Activated CD4-positive, alpha-beta T cell treated with anti-CD3 and anti-CD28 coated beads for 36 hours (primary cell): ENCODE measurements at regions of chr4 and their contacts with region 1.

Region 1: GRCh38 chr4:123488916-123489315 is 92.3 kb downstream of the SPRY1 start:
- DNase-seq: peak; percentile 17
- ATAC-seq: peak; percentile 97
- H3K4me3 Mint-ChIP-seq: no peak overlapping the region
- H3K27ac Mint-ChIP-seq: no peak overlapping the region
- H3K4me1 Mint-ChIP-seq: peaks cover 9% of the 10 kb centered on the region
- H3K27me3 Mint-ChIP-seq: peaks cover under 1% of the 10 kb centered on the region

Region 2: GRCh38 chr4:123168812-123169211 is 320.1 kb before region 1 on chr4:
- CTCF ChIA-PET with region 1: no interaction called
- POLR2A ChIA-PET with region 1: no interaction called
- intact Hi-C with region 1: no loop called
- DNase-seq: no peak
- ATAC-seq: no peak
- H3K4me3 Mint-ChIP-seq: no peak overlapping the region
- H3K27ac Mint-ChIP-seq: no peak overlapping the region
- H3K4me1 Mint-ChIP-seq: no peaks in the 10 kb centered on the region
- H3K27me3 Mint-ChIP-seq: no peaks in the 10 kb centered on the region

Region 3: GRCh38 chr4:123421227-123421936 is 67.5 kb before region 1 on chr4:
- CTCF ChIA-PET with region 1: no interaction called
- POLR2A ChIA-PET with region 1: interaction called, 5 read pairs
- intact Hi-C with region 1: loop called in 1 of 2 experiments (anchors 5 kb)
- DNase-seq: no peak
- ATAC-seq: peak; percentile 7
- H3K4me3 Mint-ChIP-seq: peak overlapping the region; percentile 60
- H3K27ac Mint-ChIP-seq: peak overlapping the region; percentile 97
- H3K4me1 Mint-ChIP-seq: peaks cover 68% of the 10 kb centered on the region
- H3K27me3 Mint-ChIP-seq: peaks cover 2% of the 10 kb centered on the region

Region 4: DNA sequence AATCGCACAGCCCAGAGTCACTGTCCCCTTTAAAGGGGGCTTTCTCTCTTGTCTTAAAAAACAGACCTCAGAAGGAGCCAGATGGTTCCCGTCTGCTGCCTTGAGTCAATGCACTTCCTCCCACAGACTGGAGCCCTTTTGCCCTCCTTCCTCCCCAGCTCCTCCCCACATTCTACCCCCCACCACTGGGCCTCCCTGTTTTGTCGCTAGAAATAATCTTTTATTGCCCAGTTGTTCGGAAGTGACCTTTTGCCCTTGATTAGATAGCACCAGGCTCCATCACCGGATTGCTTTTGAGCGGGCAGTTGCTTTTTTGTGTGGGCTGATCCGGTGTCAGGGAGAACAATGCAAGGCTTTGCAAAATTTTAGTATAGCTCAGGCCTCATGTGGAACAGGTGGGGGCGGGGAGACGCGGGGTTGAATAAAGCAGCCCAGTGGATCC is 44.6 kb before region 1 on chr4:
- CTCF ChIA-PET with region 1: interaction called, 3 read pairs
- POLR2A ChIA-PET with region 1: interaction called, 3 read pairs
- intact Hi-C with region 1: loop called in 1 of 2 experiments (anchors 2 kb)
- DNase-seq: peak; percentile 66
- ATAC-seq: peak; percentile 77
- H3K4me3 Mint-ChIP-seq: peak overlapping the region; percentile 47
- H3K27ac Mint-ChIP-seq: peak overlapping the region; percentile 76
- H3K4me1 Mint-ChIP-seq: peaks cover 19% of the 10 kb centered on the region
- H3K27me3 Mint-ChIP-seq: no peaks in the 10 kb centered on the region

Region 5: DNA sequence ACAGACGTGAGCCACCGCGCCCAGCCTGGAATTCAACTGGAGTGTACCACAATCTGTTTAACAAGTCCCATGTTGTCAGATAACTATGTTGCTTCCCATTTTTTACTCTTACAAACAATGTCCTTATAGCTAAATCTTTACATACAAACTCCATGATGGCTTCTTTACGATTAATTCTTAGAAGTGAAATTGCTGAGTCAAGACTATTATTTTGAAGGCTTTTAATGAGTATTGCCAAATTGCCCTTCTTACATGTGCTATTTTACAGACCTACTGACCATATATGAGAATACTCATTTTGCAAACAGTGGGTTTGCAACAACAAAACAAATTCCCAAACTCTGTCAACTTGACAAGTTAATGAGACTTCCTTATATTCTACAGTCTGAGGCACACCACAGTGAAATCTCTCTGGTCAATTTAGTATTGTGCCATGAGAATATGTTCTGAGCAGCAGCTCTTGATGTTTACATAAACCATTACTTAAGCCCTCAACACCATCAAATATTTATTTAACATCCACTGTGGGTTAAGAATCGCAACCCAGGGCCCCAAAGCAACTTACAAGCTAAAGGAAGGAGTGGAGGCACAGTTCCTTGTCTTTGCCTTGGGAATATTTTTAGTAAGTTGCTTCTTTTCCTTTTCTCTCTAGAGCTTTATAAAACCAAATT is 36.2 kb after region 1 on chr4:
- CTCF ChIA-PET with region 1: no interaction called
- POLR2A ChIA-PET with region 1: no interaction called
- intact Hi-C with region 1: no loop called
- DNase-seq: no peak
- ATAC-seq: no peak
- H3K4me3 Mint-ChIP-seq: no peak overlapping the region
- H3K27ac Mint-ChIP-seq: no peak overlapping the region
- H3K4me1 Mint-ChIP-seq: peaks cover 10% of the 10 kb centered on the region
- H3K27me3 Mint-ChIP-seq: peaks cover 4% of the 10 kb centered on the region

Region 6: DNA sequence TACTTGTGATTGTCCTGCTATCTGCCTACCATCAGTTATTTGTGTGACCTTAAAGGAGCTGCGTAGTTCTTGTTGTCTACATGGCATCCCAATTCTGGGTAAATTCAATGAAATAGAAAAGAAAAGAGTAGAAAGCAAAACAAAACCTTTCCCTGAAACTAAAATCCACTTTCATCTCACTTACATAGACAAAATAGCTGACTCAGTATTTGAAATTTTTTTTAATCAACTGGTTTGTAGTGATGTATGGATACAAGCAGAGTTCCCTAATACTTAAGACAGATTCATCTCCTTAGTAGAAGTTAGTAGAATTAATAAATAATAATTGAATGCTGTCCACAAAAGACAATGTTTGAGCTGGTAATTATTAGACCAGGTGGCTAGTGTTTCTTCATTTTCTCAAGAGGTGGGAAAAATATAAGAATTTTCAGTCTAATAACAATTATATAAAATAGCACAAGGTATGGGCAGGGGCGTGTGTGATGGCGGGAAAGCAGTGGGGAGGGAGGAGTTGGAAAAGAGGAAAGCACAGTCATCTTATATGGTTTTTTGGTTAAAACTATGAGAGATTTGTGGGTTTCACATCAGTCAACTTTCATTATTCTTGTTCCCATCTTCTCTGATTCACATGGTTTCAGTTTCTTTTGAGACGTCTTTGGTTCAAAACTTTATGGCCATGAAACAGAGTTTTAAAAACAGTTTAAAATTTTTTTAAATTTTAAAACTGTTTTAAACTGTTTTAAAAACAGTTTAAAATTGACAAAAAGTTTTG is 182.9 kb after region 1 on chr4:
- CTCF ChIA-PET with region 1: no interaction called
- POLR2A ChIA-PET with region 1: no interaction called
- intact Hi-C with region 1: loop called in 1 of 2 experiments (anchors 5 kb)
- DNase-seq: peak; percentile 60
- ATAC-seq: peak; percentile 79
- H3K4me3 Mint-ChIP-seq: no peak overlapping the region
- H3K27ac Mint-ChIP-seq: no peak overlapping the region
- H3K4me1 Mint-ChIP-seq: peaks cover 30% of the 10 kb centered on the region
- H3K27me3 Mint-ChIP-seq: peaks cover 51% of the 10 kb centered on the region